Heart left ventricle (tissue), 16 donors: ENCODE measurements at regions of chr2 and their contacts with region 1.

Region 1: GRCh38 chr2:190334479-190335224 is 8.7 kb upstream of the INPP1 start:
- DNase-seq: no peak
- ATAC-seq: peak; percentile 67 to 97 (median 82)
- H3K4me3 ChIP-seq: no peak overlapping the region
- H3K27ac ChIP-seq: peak overlapping the region in 10 of 12 donors; percentile 11 to 68 (median 42)
- H3K4me1 ChIP-seq: peaks cover 0 to 11% (median 4%) of the 10 kb centered on the region in 12 donors
- H3K27me3 ChIP-seq: no peaks in the 10 kb centered on the region
- CTCF ChIP-seq: no peak
- POLR2A ChIP-seq: no peak

Region 2: GRCh38 chr2:190511104-190511503 is 176.5 kb after region 1 on chr2:
- intact Hi-C with region 1: loop called in 2 of 10 experiments (anchors 5 to 10 kb)
- DNase-seq: no peak
- ATAC-seq: no peak
- H3K4me3 ChIP-seq: no peak overlapping the region
- H3K27ac ChIP-seq: no peak overlapping the region
- H3K4me1 ChIP-seq: peaks cover 0 to 10% (median 0%) of the 10 kb centered on the region in 12 donors
- H3K27me3 ChIP-seq: no peaks in the 10 kb centered on the region
- CTCF ChIP-seq: peak; percentile 16 to 72 (median 58)
- POLR2A ChIP-seq: no peak

Region 3: GRCh38 chr2:190695739-190696138 is 361.1 kb after region 1 on chr2:
- intact Hi-C with region 1: no loop called
- DNase-seq: no peak
- ATAC-seq: no peak
- H3K4me3 ChIP-seq: no peak overlapping the region
- H3K27ac ChIP-seq: no peak overlapping the region
- H3K4me1 ChIP-seq: no peaks in the 10 kb centered on the region
- H3K27me3 ChIP-seq: no peaks in the 10 kb centered on the region
- CTCF ChIP-seq: no peak
- POLR2A ChIP-seq: no peak